Activated B cell treated with CpG ODN at 0.5 μM for 24 hours (primary cell): ENCODE measurements at regions of chr19 and their contacts with region 1.

Region 1: GRCh38 chr19:33235269-33235995 is 9.8 kb upstream of the SLC7A10 start:
- DNase-seq: peak; percentile 74
- ATAC-seq: peak; percentile 91
- H3K4me3 Mint-ChIP-seq: peak overlapping the region; percentile 44
- H3K27ac Mint-ChIP-seq: no peak overlapping the region
- H3K4me1 Mint-ChIP-seq: peaks cover 4% of the 10 kb centered on the region
- H3K27me3 Mint-ChIP-seq: peaks cover 10% of the 10 kb centered on the region
- CTCF ChIP-seq: peak; percentile 41

Region 2: DNA sequence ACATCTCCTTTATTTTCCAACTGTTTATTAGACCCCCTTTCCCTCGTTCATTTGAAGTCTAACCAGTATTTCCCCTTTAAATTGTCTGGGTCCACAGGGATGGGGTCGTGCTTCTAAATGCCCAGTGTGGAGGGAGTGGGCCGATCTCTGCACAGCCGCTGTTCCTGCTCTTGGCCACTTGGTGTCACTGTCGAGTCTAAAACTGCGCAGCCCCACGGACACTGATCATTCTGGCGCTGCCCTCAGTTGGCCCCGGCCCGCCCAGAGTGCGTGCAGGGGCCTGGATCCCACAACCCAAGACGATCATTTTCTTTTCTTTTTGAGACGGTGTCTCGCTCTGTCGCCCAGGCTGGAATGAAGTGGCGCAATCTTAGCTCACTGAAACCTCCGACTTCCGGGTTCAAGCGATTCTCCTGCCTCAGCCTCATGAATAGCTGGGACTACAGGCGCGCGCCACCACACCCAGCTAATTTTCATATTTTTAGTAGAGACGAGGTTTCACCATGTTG is 91.5 kb before region 1 on chr19:
- CTCF ChIA-PET with region 1: interaction called, 5 read pairs
- POLR2A ChIA-PET with region 1: no interaction called
- intact Hi-C with region 1: loop called (anchors 1 kb)
- DNase-seq: peak; percentile 38
- ATAC-seq: peak; percentile 98
- H3K4me3 Mint-ChIP-seq: peak overlapping the region; percentile 44
- H3K27ac Mint-ChIP-seq: no peak overlapping the region
- H3K4me1 Mint-ChIP-seq: peaks cover 5% of the 10 kb centered on the region
- H3K27me3 Mint-ChIP-seq: peaks cover 17% of the 10 kb centered on the region
- CTCF ChIP-seq: no peak

Region 3: GRCh38 chr19:33302175-33302973 is 66.9 kb after region 1 on chr19 and contains the start of gene CEBPA:
- CTCF ChIA-PET with region 1: interaction called, 3 read pairs
- POLR2A ChIA-PET with region 1: no interaction called
- intact Hi-C with region 1: loop called (anchors 1 kb)
- DNase-seq: peak; percentile 70
- ATAC-seq: peak; percentile 93
- H3K4me3 Mint-ChIP-seq: peak within 1 kb of the TSS; percentile 77
- H3K27ac Mint-ChIP-seq: no peak within 1 kb of the TSS
- H3K4me1 Mint-ChIP-seq: peaks cover 7% of the 10 kb centered on the region
- H3K27me3 Mint-ChIP-seq: peaks cover 32% of the 10 kb centered on the region
- CTCF ChIP-seq: no peak
- total RNA-seq, gene CEBPA: 0.51 and 0.83 TPM in 2 replicates

Region 4: DNA sequence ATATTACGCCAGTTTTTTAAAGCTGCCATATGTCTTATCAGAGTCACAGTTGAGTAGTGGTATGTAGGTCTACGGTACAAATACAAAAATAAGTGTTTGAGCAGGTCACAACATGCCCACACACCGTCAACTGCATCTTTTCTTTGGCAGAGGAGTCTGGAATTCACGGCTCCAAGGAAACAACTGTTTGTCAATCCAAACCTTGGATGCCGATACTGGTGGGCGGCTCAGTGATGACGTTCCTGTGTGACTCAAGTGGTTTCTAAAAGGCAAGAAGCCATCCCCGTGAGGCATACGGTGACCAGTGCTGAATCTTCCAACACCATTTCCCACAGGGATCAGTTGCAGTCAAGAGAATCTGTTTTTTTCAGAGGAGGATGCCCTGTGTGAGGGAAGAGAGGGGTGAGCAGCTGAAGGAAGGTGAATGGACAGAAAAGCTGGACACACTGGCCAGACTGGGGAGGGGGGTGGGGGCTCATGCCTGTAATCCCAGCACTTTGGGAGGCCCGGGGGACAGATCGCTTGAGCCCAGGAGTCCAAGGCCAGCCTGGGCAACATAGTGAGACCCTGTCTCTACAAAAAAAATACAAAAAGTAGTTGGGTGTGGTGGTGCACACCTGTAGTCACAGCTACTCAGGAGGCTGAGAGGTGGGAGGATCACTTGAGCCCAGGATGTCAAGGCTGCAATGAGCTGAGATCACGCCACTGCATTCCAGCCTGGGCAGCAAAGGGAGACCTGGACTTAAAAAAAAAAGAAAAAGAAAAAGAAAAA is 115.3 kb after region 1 on chr19:
- CTCF ChIA-PET with region 1: no interaction called
- POLR2A ChIA-PET with region 1: no interaction called
- intact Hi-C with region 1: no loop called
- DNase-seq: no peak
- ATAC-seq: no peak
- H3K4me3 Mint-ChIP-seq: no peak overlapping the region
- H3K27ac Mint-ChIP-seq: no peak overlapping the region
- H3K4me1 Mint-ChIP-seq: no peaks in the 10 kb centered on the region
- H3K27me3 Mint-ChIP-seq: peaks cover 27% of the 10 kb centered on the region
- CTCF ChIP-seq: no peak

Region 5: GRCh38 chr19:33373701-33374421 is 138.4 kb after region 1 on chr19 and contains the start of gene CEBPG:
- CTCF ChIA-PET with region 1: no interaction called
- POLR2A ChIA-PET with region 1: interaction called, 9 read pairs
- intact Hi-C with region 1: loop called (anchors 1 kb)
- DNase-seq: no peak
- ATAC-seq: peak; percentile 34
- H3K4me3 Mint-ChIP-seq: peak within 1 kb of the TSS; percentile 86
- H3K27ac Mint-ChIP-seq: peak within 1 kb of the TSS; percentile 93
- H3K4me1 Mint-ChIP-seq: peaks cover 52% of the 10 kb centered on the region
- H3K27me3 Mint-ChIP-seq: no peaks in the 10 kb centered on the region
- CTCF ChIP-seq: no peak
- total RNA-seq, gene CEBPG: 30.6 and 32.0 TPM in 2 replicates

Region 6: DNA sequence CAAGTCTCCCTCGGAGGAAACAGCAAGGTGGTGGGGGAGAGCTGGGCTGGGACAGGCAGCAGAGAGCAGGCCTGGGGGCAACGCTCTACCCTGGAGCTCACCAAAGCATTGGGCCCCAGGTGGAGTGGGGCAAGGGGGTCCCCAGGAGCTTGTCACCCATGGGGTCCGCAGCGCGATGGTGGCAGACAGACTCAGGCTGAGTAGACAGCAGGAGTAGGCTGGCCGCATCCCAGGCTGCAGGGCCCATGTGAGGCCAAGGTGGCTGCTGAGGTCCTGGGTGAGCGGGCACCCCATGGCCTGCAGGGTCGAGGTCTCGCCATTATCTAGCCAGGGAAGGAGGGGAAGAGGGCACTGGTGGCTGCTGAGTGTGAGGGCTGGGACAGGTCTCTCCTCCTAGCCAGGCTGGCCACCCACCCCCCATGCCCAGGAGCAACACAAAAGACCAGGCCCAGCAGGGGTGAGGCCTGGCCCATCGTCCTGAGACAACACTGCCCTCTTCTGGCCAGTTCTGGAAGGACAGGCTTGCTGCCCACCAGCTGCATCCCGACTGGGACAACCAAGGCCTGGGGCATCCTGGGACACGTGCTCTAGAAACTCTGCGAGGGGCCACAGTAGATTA is 171.2 kb after region 1 on chr19:
- CTCF ChIA-PET with region 1: interaction called, 72 read pairs
- POLR2A ChIA-PET with region 1: no interaction called
- intact Hi-C with region 1: loop called (anchors 1 kb)
- DNase-seq: peak; percentile 75
- ATAC-seq: peak; percentile 85
- H3K4me3 Mint-ChIP-seq: no peak overlapping the region
- H3K27ac Mint-ChIP-seq: no peak overlapping the region
- H3K4me1 Mint-ChIP-seq: no peaks in the 10 kb centered on the region
- H3K27me3 Mint-ChIP-seq: no peaks in the 10 kb centered on the region
- CTCF ChIP-seq: no peak

Region 7: DNA sequence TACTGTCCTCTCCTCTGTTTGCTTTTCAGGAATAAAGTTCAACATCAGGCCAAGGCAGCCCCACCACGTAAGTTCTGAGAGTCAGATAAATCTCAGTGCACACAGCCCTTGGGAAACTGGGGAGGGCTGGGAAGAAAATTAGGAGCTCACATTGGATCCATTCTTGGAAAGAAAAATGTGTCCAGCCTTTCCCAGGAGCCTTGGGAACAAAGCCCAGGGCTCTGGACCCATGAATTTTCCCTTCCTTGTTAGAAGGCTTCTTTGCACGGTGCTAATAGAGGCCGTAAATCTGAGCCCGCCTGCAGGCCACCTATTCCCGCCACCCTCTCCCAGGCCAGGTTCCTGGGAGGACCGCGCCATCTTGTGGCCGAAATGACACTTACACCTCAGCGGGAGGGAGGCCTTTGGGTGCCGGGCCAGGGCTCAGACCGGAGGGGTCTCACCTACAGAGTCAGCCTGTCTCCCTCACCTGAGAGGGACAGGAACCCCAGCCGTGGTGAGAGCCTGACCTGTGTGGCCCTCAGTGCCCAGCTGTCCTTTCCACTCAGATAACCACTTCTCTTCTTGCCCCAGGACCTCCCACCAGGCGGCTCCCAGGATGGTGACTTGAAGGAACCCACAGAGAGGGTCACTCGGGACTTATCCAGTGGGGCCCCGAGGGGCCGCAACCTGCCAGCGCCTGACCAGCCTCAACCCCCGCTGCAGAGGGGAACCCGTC is 536.1 kb after region 1 on chr19:
- CTCF ChIA-PET with region 1: no interaction called
- POLR2A ChIA-PET with region 1: no interaction called
- intact Hi-C with region 1: loop called (anchors 1 kb)
- DNase-seq: peak; percentile 42
- ATAC-seq: peak; percentile 54
- H3K4me3 Mint-ChIP-seq: no peak overlapping the region
- H3K27ac Mint-ChIP-seq: no peak overlapping the region
- H3K4me1 Mint-ChIP-seq: no peaks in the 10 kb centered on the region
- H3K27me3 Mint-ChIP-seq: peaks cover 16% of the 10 kb centered on the region
- CTCF ChIP-seq: no peak